ENCODE measurements at regions of chr16 and their contacts with region 1.

Region 1: DNA sequence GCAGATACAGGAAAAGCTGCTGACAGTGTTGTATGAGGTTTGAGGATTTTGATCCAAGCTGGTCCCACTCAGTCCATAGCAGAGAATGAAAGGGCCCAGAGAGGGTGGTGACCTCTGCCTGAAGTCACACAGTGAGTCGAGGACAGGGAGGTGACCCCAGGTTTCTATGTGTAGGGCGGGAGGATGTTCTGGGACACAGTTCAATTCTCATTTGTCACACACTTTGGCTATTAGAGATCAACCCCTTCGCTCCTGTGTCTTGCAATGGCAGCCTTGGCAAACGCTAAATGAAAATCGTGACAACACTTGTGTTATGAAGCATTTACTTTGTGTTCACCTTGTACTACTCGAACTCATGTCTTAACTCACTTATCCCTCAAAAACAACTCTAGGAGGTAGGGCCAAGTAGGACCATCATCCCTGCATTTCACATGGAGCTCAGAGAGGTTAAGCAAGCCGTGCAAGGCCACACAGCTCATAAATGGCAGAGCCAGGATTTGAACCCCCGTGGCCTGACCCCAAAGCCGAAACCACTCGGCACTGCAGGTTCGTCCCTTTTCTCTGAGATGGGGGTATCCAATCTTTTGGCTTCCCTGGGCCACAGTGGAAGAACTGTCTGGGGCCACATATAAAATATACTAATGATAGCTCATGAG is 10.2 kb downstream of the DEXI start:
- DNase-seq: no peak
- ATAC-seq: no peak
- H3K4me3 ChIP-seq: no peak overlapping the region
- H3K27ac ChIP-seq: no peak overlapping the region
- H3K4me1 ChIP-seq: no peaks in the 10 kb centered on the region
- H3K27me3 ChIP-seq: no peaks in the 10 kb centered on the region
- CTCF ChIP-seq: no peak

Region 2: DNA sequence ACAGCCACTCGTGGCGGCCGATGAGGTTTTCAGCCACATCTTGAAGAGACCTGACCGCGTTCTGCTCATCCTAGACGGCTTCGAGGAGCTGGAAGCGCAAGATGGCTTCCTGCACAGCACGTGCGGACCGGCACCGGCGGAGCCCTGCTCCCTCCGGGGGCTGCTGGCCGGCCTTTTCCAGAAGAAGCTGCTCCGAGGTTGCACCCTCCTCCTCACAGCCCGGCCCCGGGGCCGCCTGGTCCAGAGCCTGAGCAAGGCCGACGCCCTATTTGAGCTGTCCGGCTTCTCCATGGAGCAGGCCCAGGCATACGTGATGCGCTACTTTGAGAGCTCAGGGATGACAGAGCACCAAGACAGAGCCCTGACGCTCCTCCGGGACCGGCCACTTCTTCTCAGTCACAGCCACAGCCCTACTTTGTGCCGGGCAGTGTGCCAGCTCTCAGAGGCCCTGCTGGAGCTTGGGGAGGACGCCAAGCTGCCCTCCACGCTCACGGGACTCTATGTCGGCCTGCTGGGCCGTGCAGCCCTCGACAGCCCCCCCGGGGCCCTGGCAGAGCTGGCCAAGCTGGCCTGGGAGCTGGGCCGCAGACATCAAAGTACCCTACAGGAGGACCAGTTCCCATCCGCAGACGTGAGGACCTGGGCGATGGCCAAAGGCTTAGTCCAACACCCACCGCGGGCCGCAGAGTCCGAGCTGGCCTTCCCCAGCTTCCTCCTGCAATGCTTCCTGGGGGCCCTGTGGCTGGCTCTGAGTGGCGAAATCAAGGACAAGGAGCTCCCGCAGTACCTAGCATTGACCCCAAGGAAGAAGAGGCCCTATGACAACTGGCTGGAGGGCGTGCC is 25.0 kb before region 1 on chr16:
- CTCF ChIA-PET with region 1: no interaction called
- POLR2A ChIA-PET with region 1: interaction called, 16 read pairs
- intact Hi-C with region 1: no loop called
- DNase-seq: no peak
- ATAC-seq: no peak
- H3K4me3 ChIP-seq: no peak overlapping the region
- H3K27ac ChIP-seq: no peak overlapping the region
- H3K4me1 ChIP-seq: no peaks in the 10 kb centered on the region
- H3K27me3 ChIP-seq: no peaks in the 10 kb centered on the region
- CTCF ChIP-seq: no peak